Activated B cell treated with CpG ODN at 0.5 μM for 24 hours (primary cell): ENCODE measurements at regions of chr14 and their contacts with region 1.

Region 1: DNA sequence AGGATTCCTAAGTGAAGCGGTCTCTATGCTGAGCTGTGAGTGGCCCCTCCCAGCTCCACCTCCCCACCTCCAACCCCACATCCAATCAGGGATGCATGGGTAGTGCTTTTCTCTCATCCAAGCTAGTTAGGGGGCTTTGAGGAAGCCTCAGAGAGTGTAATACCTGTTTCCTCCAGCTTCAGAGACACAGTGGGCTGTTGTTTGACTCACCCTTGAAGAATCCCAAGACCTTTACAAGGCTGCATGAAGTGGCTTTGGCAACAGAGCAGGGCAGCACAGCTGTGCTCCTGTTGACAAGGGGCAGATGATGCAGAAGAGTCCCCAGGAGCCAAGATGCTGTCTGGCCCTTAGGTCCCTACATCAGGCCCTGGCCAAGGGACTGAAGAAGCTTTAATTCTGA is 27.1 kb upstream of the CLMN start:
- DNase-seq: no peak
- ATAC-seq: no peak
- H3K4me3 Mint-ChIP-seq: no peak overlapping the region
- H3K27ac Mint-ChIP-seq: no peak overlapping the region
- H3K4me1 Mint-ChIP-seq: no peaks in the 10 kb centered on the region
- H3K27me3 Mint-ChIP-seq: peaks cover 11% of the 10 kb centered on the region
- CTCF ChIP-seq: no peak

Region 2: GRCh38 chr14:95327558-95328374 is 19.1 kb before region 1 on chr14:
- CTCF ChIA-PET with region 1: no interaction called
- POLR2A ChIA-PET with region 1: interaction called, 3 read pairs
- intact Hi-C with region 1: loop called (anchors 2 kb)
- DNase-seq: peak; percentile 48
- ATAC-seq: peak; percentile 84
- H3K4me3 Mint-ChIP-seq: peak overlapping the region; percentile 76
- H3K27ac Mint-ChIP-seq: peak overlapping the region; percentile 97
- H3K4me1 Mint-ChIP-seq: peaks cover 53% of the 10 kb centered on the region
- H3K27me3 Mint-ChIP-seq: no peaks in the 10 kb centered on the region
- CTCF ChIP-seq: no peak

Region 3: GRCh38 chr14:95463171-95463901 is 116.5 kb after region 1 on chr14:
- CTCF ChIA-PET with region 1: no interaction called
- POLR2A ChIA-PET with region 1: no interaction called
- intact Hi-C with region 1: no loop called
- DNase-seq: no peak
- ATAC-seq: peak; percentile 18
- H3K4me3 Mint-ChIP-seq: peak overlapping the region; percentile 35
- H3K27ac Mint-ChIP-seq: peak overlapping the region; percentile 90
- H3K4me1 Mint-ChIP-seq: peaks cover 50% of the 10 kb centered on the region
- H3K27me3 Mint-ChIP-seq: no peaks in the 10 kb centered on the region
- CTCF ChIP-seq: no peak